Activated CD4-positive, alpha-beta memory T cell treated with anti-CD3 and anti-CD28 coated beads for 36 hours (primary cell): ENCODE measurements at regions of chr14 and their contacts with region 1.

Region 1: DNA sequence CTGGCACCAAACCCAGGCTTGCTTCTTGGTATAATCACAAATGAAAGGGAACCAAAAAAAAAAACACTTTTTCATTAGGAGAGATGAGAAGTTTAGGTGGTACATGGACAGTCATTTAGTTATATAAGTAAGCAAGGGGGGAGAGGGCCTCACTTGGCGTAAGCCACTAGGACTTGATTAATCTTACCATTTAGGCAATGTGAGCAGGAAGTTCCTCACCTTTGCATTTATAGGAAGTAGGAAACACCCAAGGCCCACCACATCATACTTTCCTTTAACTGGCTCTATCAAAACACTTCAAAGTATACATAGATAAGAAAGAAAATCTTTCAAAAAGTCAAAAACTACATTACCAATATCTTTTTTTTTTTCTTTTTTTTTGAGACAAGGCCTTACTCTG is 6.7 kb upstream of the RPS6KA5 start:
- DNase-seq: peak; percentile 66
- H3K4me3 Mint-ChIP-seq: no peak overlapping the region
- H3K27ac Mint-ChIP-seq: peak overlapping the region; percentile 65
- H3K4me1 Mint-ChIP-seq: peaks cover 66% of the 10 kb centered on the region
- H3K27me3 Mint-ChIP-seq: no peaks in the 10 kb centered on the region

Region 2: GRCh38 chr14:90842726-90843125 is 224.5 kb before region 1 on chr14:
- CTCF ChIA-PET with region 1: no interaction called
- POLR2A ChIA-PET with region 1: no interaction called
- intact Hi-C with region 1: no loop called
- DNase-seq: no peak
- H3K4me3 Mint-ChIP-seq: no peak overlapping the region
- H3K27ac Mint-ChIP-seq: no peak overlapping the region
- H3K4me1 Mint-ChIP-seq: no peaks in the 10 kb centered on the region
- H3K27me3 Mint-ChIP-seq: no peaks in the 10 kb centered on the region

Region 3: DNA sequence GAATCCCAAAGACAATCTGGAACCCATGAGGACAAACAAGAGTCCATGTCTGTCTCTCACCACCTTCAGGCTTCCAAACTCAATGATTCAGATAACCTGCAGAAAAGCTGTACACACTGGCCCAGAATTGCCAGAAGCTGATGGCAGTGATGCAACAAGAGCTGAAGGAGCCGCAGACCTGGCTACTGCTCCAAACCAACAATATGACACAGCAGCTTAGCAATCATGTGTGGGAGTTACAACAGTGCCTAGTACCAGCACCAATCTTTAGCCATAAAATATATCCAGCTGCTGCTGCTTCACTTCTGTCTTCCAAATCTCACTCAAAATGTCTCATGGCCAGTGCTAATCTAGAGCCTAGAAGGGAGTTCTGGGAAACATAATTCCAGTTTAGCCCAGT is 28.7 kb before region 1 on chr14:
- CTCF ChIA-PET with region 1: no interaction called
- POLR2A ChIA-PET with region 1: no interaction called
- intact Hi-C with region 1: no loop called
- DNase-seq: peak; percentile 45
- H3K4me3 Mint-ChIP-seq: no peak overlapping the region
- H3K27ac Mint-ChIP-seq: peak overlapping the region; percentile 42
- H3K4me1 Mint-ChIP-seq: peaks cover 75% of the 10 kb centered on the region
- H3K27me3 Mint-ChIP-seq: no peaks in the 10 kb centered on the region

Region 4: GRCh38 chr14:91078095-91078737 is 11.0 kb after region 1 on chr14:
- CTCF ChIA-PET with region 1: interaction called, 7 read pairs
- POLR2A ChIA-PET with region 1: interaction called, 12 read pairs
- intact Hi-C with region 1: loop called (anchors 1 kb)
- DNase-seq: peak; percentile 76
- H3K4me3 Mint-ChIP-seq: peak overlapping the region; percentile 13
- H3K27ac Mint-ChIP-seq: peak overlapping the region; percentile 87
- H3K4me1 Mint-ChIP-seq: peaks cover 30% of the 10 kb centered on the region
- H3K27me3 Mint-ChIP-seq: no peaks in the 10 kb centered on the region